HEK293 (cell line): ENCODE measurements at regions of chr2 and their contacts with region 1.

Region 1: GRCh38 chr2:68121873-68122679 is 35.6 kb upstream of the PNO1 start:
- H3K4me3 ChIP-seq: no peak overlapping the region
- H3K27ac ChIP-seq: no peak overlapping the region
- H3K4me1 ChIP-seq: peaks cover 6% of the 10 kb centered on the region; the same call in 1 of the 2 replicates
- CTCF ChIP-seq: peak; percentile 80

Region 2: GRCh38 chr2:67581751-67582150 is 540.3 kb before region 1 on chr2:
- CTCF ChIA-PET with region 1: no interaction called
- POLR2A ChIA-PET with region 1: no interaction called
- H3K4me3 ChIP-seq: no peak overlapping the region
- H3K27ac ChIP-seq: no peak overlapping the region
- H3K4me1 ChIP-seq: no peaks in the 10 kb centered on the region
- CTCF ChIP-seq: no peak

Region 3: GRCh38 chr2:68108120-68108519 is 14.0 kb before region 1 on chr2:
- CTCF ChIA-PET with region 1: interaction called, 17 read pairs
- POLR2A ChIA-PET with region 1: no interaction called
- H3K4me3 ChIP-seq: no peak overlapping the region
- H3K27ac ChIP-seq: no peak overlapping the region
- H3K4me1 ChIP-seq: no peaks in the 10 kb centered on the region
- CTCF ChIP-seq: no peak

Region 4: GRCh38 chr2:68141875-68142274 is 19.8 kb after region 1 on chr2:
- CTCF ChIA-PET with region 1: interaction called, 13 read pairs
- POLR2A ChIA-PET with region 1: no interaction called
- H3K4me3 ChIP-seq: no peak overlapping the region
- H3K27ac ChIP-seq: no peak overlapping the region
- H3K4me1 ChIP-seq: no peaks in the 10 kb centered on the region
- CTCF ChIP-seq: no peak

Region 5: DNA sequence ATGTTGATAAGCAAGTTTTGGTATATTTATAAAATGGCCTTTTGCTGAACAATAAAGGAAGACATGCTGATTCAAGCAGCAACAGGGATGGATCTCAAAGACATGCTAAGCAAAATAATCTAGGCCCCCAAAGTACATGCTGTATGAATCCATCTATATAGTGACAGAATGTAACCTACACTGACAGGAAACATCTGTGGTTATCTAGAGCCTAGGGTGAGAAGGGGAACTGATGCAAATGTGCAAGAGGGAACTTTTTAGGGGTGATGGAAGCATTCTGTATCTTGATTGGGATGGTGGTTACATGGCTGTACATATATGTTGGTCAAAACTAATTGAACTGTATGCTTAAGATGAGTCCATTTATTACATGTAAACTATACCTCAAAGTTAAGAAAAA is 173.4 kb after region 1 on chr2:
- CTCF ChIA-PET with region 1: interaction called, 27 read pairs
- POLR2A ChIA-PET with region 1: no interaction called
- H3K4me3 ChIP-seq: no peak overlapping the region
- H3K27ac ChIP-seq: no peak overlapping the region
- H3K4me1 ChIP-seq: no peaks in the 10 kb centered on the region
- CTCF ChIP-seq: no peak

Region 6: DNA sequence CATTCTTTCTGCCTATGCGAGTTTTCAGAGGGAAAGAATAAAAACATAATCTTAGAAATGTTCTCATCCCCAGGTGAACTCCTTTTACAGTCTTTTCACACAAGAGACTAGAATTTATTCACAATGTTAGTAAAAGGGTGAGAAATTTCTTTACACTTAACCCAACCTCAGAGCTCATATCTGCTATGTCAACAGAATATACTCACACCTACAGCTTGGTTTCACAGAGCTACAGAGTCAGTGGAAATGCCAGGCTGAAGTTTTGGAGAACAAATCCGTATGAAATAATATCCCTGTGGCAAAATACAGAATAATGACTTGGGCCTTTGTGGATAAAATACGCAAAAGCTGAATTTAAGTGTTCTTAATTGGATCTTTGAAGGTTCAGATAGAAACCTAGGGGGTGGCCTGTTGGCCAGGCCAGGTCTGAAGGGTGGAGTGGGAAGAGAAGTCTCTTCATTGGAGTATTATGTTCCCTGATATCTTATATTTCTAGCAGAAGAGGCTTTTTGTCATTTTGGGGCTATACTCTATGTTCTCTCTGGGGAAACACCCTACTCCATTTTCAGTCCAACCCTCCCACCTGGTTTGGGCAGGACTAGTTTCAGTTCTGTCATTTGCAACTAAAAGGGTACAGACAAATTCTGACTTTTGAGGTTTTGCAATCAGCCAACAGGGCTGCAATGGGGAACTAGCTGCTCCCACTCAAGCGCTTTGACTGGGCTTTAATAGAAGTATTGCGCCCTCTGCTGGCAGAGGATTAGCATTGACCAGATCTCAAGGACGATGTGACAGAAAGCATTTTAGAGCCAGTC is 319.3 kb after region 1 on chr2:
- CTCF ChIA-PET with region 1: interaction called, 30 read pairs
- POLR2A ChIA-PET with region 1: no interaction called
- H3K4me3 ChIP-seq: no peak overlapping the region
- H3K27ac ChIP-seq: no peak overlapping the region
- H3K4me1 ChIP-seq: peaks cover 2% of the 10 kb centered on the region; the same call in 1 of the 2 replicates
- CTCF ChIP-seq: peak; percentile 85